ENCODE measurements at regions of chr4 and their contacts with region 1.

Region 1: GRCh38 chr4:152535903-152536544 is at the start of gene FBXW7:
- DNase-seq: peak; percentile 99 to 100 (median 100)
- ATAC-seq: peak; percentile 85 to 86 (median 85)
- H3K4me3 ChIP-seq: peak within 1 kb of the TSS; percentile 88 to 93
- H3K4me3 Mint-ChIP-seq: peak within 1 kb of the TSS; percentile 97 to 98 (median 98)
- H3K27ac ChIP-seq: peak within 1 kb of the TSS; percentile 95
- H3K27ac Mint-ChIP-seq: peak within 1 kb of the TSS; percentile 97 to 100
- H3K4me1 ChIP-seq: peaks cover 33 to 41% of the 10 kb centered on the region in 2 experiments
- H3K4me1 Mint-ChIP-seq: peaks cover 67 to 80% (median 71%) of the 10 kb centered on the region in 3 donors
- H3K27me3 ChIP-seq: no peaks in the 10 kb centered on the region
- H3K27me3 Mint-ChIP-seq: no peaks in the 10 kb centered on the region
- total RNA-seq, gene FBXW7: 91.9 to 131 (median 96.0) TPM

Region 2: GRCh38 chr4:152554742-152555141 is 18.7 kb after region 1 on chr4:
- CTCF ChIA-PET with region 1: interaction called, 3 to 4 read pairs
- POLR2A ChIA-PET with region 1: interaction called, 5 to 14 read pairs
- DNase-seq: no peak
- ATAC-seq: no peak
- H3K4me3 ChIP-seq: no peak overlapping the region
- H3K4me3 Mint-ChIP-seq: peak overlapping the region in 1 of 3 donors; percentile 73
- H3K27ac ChIP-seq: peak overlapping the region; percentile 87
- H3K27ac Mint-ChIP-seq: peak overlapping the region; percentile 92 to 95
- H3K4me1 ChIP-seq: peaks cover 19 to 27% of the 10 kb centered on the region in 2 experiments
- H3K4me1 Mint-ChIP-seq: peaks cover 42 to 59% (median 53%) of the 10 kb centered on the region in 3 donors
- H3K27me3 ChIP-seq: no peaks in the 10 kb centered on the region
- H3K27me3 Mint-ChIP-seq: no peaks in the 10 kb centered on the region

Region 3: DNA sequence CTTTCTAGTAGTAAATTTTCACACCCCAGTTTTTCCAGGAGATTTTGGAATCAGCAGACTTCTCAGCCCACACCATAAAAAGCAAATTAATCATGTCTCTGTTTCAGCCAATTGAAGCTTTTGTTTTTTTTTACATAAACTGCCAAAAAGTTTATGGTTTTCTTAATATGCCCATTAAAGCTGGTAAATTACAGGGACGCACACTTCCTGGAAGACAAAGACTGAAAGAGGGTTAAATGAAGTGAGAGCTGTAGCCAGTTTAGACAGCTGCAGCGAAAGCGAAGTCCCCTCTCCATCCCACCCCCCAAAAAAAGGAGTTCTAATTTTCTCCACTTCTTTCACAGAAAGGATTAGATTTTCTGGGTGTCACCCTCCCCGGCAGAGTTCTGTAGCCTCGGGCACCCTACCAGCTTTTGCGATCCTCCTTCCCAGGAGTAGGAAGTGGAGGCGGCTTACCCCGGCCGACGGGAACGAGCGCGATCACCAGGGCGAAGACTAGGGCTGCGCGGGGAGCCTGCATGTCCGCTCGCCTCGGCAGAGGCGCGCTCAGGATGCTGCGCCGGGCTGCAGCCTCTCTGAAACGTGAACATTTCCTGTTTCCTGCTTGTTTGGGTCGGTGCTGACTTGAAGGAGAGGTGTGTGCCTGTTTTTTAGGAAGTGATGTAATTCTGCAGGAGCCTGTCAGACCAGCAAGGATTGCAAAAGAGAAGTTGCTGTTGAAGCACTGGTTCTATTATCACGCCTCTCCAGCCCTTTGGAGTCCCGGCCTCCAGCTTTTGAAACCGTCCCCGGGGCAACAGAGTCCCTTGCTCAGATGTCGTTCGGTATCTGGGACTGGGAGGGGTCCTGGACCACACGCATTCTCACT is 143.6 kb after region 1 on chr4 and contains the start of gene TMEM154:
- CTCF ChIA-PET with region 1: interaction called in 1 of 2 experiments, 10 read pairs
- POLR2A ChIA-PET with region 1: interaction called in 1 of 2 experiments, 4 read pairs
- DNase-seq: peak; percentile 54 to 83 (median 67)
- ATAC-seq: peak; percentile 99 to 100 (median 100)
- H3K4me3 ChIP-seq: peak within 1 kb of the TSS; percentile 77 to 85
- H3K4me3 Mint-ChIP-seq: peak within 1 kb of the TSS; percentile 89 to 95 (median 92)
- H3K27ac ChIP-seq: peak within 1 kb of the TSS; percentile 77
- H3K27ac Mint-ChIP-seq: peak within 1 kb of the TSS; percentile 93 to 97
- H3K4me1 ChIP-seq: peaks cover 19% of the 10 kb centered on the region in 2 experiments
- H3K4me1 Mint-ChIP-seq: peaks cover 44 to 52% (median 49%) of the 10 kb centered on the region in 3 donors
- H3K27me3 ChIP-seq: peaks cover 0 to 6% of the 10 kb centered on the region in 2 experiments
- H3K27me3 Mint-ChIP-seq: no peaks in the 10 kb centered on the region
- total RNA-seq, gene TMEM154: 19.3 to 28.5 (median 24.6) TPM